Ascending aorta (tissue), 2 donors: ENCODE measurements at regions of chr5 and their contacts with region 1.

Region 1: GRCh38 chr5:147303976-147304375 is 69.2 kb downstream of the STK32A start:
- DNase-seq: peak in 1 of 2 donors; percentile 81
- H3K4me3 ChIP-seq: no peak overlapping the region
- H3K27ac ChIP-seq: peak overlapping the region; percentile 77 to 88
- H3K4me1 ChIP-seq: peaks cover 0 to 31% of the 10 kb centered on the region in 2 donors
- H3K27me3 ChIP-seq: no peaks in the 10 kb centered on the region
- CTCF ChIP-seq: no peak

Region 2: GRCh38 chr5:147743678-147744374 is 439.9 kb after region 1 on chr5:
- intact Hi-C with region 1: no loop called
- DNase-seq: no peak
- H3K4me3 ChIP-seq: no peak overlapping the region
- H3K27ac ChIP-seq: no peak overlapping the region
- H3K4me1 ChIP-seq: no peaks in the 10 kb centered on the region
- H3K27me3 ChIP-seq: no peaks in the 10 kb centered on the region
- CTCF ChIP-seq: no peak

Region 3: GRCh38 chr5:147892821-147893232 is 588.9 kb after region 1 on chr5:
- intact Hi-C with region 1: loop called (anchors 10 kb)
- DNase-seq: no peak
- H3K4me3 ChIP-seq: no peak overlapping the region
- H3K27ac ChIP-seq: peak overlapping the region; percentile 79 to 95
- H3K4me1 ChIP-seq: peaks cover 0 to 38% of the 10 kb centered on the region in 2 donors
- H3K27me3 ChIP-seq: no peaks in the 10 kb centered on the region
- CTCF ChIP-seq: no peak